ENCODE measurements at regions of chr2 and their contacts with region 1.

Region 1: DNA sequence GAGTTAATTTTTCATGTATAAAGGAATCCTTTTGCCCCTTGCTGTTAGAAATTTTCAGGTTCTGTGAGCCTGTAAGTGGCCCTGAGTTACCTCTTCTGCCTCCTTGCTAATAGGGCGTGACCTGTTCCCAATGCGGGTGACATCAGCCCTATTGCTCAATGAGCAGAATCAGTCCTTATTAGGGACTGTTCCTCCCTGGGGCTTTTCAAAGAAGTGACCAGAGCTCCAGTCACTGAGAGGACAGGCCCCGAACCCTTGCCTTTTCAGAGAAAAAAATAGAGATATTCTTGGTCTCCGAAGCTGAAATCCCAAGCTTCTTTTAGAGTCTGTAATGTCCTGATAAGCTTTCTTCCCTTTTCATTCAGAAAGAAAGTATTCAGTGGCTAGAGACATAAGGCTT is 8.2 kb upstream of the APOB start:
- DNase-seq: peak; percentile 89
- ATAC-seq: peak; percentile 38
- H3K4me3 ChIP-seq: no peak overlapping the region
- H3K27ac ChIP-seq: no peak overlapping the region
- H3K4me1 ChIP-seq: peaks cover 78% of the 10 kb centered on the region
- H3K27me3 ChIP-seq: no peaks in the 10 kb centered on the region
- CTCF ChIP-seq: no peak
- EP300 ChIP-seq: peak in 1 of 2 experiments; percentile 52; a peak in 1 of 4 replicates
- POLR2A ChIP-seq: no peak
- RAD21 ChIP-seq: no peak

Region 2: GRCh38 chr2:21096458-21096857 is 44.4 kb after region 1 on chr2:
- CTCF ChIA-PET with region 1: no interaction called
- POLR2A ChIA-PET with region 1: interaction called, 16 read pairs
- in situ Hi-C with region 1: no loop called
- intact Hi-C with region 1: no loop called
- DNase-seq: peak; percentile 89
- ATAC-seq: peak; percentile 75
- H3K4me3 ChIP-seq: no peak overlapping the region
- H3K27ac ChIP-seq: peak overlapping the region; percentile 36
- H3K4me1 ChIP-seq: peaks cover 71% of the 10 kb centered on the region
- H3K27me3 ChIP-seq: no peaks in the 10 kb centered on the region
- CTCF ChIP-seq: no peak
- EP300 ChIP-seq: peak; percentile 34 to 37; a peak in 1 of 4 replicates
- POLR2A ChIP-seq: no peak
- RAD21 ChIP-seq: no peak

Region 3: DNA sequence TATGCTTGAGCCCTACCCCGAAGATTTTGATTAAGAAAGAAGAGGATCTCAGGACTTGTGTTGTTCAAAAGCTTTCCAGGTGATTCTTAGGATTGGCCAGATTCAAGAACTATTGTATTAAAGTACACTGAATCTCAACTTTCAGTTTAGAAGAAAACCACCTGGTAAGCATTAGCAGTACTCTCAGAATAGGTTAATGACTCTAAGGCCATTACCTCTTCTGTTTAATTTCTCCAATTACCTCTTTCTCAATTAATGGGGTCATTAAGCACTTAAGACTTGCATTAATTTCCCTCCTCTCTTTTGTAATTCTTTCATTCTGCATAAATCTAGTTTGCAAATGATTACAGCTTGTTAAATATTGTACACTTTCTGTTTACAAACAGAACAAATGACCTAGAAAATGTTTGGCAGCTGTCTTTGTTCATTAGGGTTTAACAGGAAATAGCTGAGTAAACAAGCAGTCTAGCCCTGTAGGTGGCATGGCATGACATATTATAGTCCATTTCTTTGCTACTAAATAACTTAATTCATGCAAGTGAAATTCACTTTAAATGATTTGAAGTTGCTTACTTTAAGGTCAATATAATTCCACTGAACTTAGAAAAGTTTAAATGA is 51.3 kb after region 1 on chr2:
- CTCF ChIA-PET with region 1: no interaction called
- POLR2A ChIA-PET with region 1: no interaction called
- in situ Hi-C with region 1: no loop called
- intact Hi-C with region 1: loop called (anchors 2 kb)
- DNase-seq: peak; percentile 30
- ATAC-seq: peak; percentile 73
- H3K4me3 ChIP-seq: peak overlapping the region in 1 of 3 experiments; percentile 0; a peak in 1 of 6 replicates
- H3K27ac ChIP-seq: no peak overlapping the region
- H3K4me1 ChIP-seq: peaks cover 50% of the 10 kb centered on the region
- H3K27me3 ChIP-seq: no peaks in the 10 kb centered on the region
- CTCF ChIP-seq: 0 out of 2 replicates have a peak, but pooled peaks have one; percentile 22
- EP300 ChIP-seq: peak in 1 of 2 experiments; percentile 62; a peak in 1 of 4 replicates
- POLR2A ChIP-seq: no peak
- RAD21 ChIP-seq: no peak

Region 4: GRCh38 chr2:21118302-21118920 is 66.4 kb after region 1 on chr2:
- CTCF ChIA-PET with region 1: no interaction called
- POLR2A ChIA-PET with region 1: interaction called, 103 read pairs
- in situ Hi-C with region 1: no loop called
- intact Hi-C with region 1: no loop called
- DNase-seq: peak; percentile 81
- ATAC-seq: peak; percentile 98
- H3K4me3 ChIP-seq: no peak overlapping the region
- H3K27ac ChIP-seq: no peak overlapping the region
- H3K4me1 ChIP-seq: peaks cover 22% of the 10 kb centered on the region
- H3K27me3 ChIP-seq: no peaks in the 10 kb centered on the region
- CTCF ChIP-seq: peak; percentile 89
- EP300 ChIP-seq: peak in 1 of 2 experiments; percentile 36; a peak in 1 of 4 replicates
- POLR2A ChIP-seq: no peak
- RAD21 ChIP-seq: peak; percentile 91

Region 5: GRCh38 chr2:21356086-21356856 is 304.2 kb after region 1 on chr2:
- CTCF ChIA-PET with region 1: no interaction called
- POLR2A ChIA-PET with region 1: no interaction called
- in situ Hi-C with region 1: no loop called
- intact Hi-C with region 1: no loop called
- DNase-seq: no peak
- ATAC-seq: no peak
- H3K4me3 ChIP-seq: no peak overlapping the region
- H3K27ac ChIP-seq: no peak overlapping the region
- H3K4me1 ChIP-seq: peaks cover 16% of the 10 kb centered on the region
- H3K27me3 ChIP-seq: peaks cover 0 to 10% of the 10 kb centered on the region in 2 experiments; a peak in 1 of 5 replicates
- CTCF ChIP-seq: no peak
- EP300 ChIP-seq: no peak
- POLR2A ChIP-seq: no peak
- RAD21 ChIP-seq: no peak